ENCODE measurements at regions of chr4 and their contacts with region 1.

Region 1: GRCh38 chr4:185911556-185912064 is 99.6 kb upstream of the SORBS2 start:
- DNase-seq: no peak
- ATAC-seq: no peak
- H3K4me3 Mint-ChIP-seq: no peak overlapping the region
- H3K27ac Mint-ChIP-seq: peak overlapping the region; percentile 20; the same call in 1 of the 2 replicates
- H3K4me1 Mint-ChIP-seq: peaks cover 39% of the 10 kb centered on the region
- H3K27me3 Mint-ChIP-seq: no peaks in the 10 kb centered on the region
- CTCF ChIP-seq: no peak

Region 2: DNA sequence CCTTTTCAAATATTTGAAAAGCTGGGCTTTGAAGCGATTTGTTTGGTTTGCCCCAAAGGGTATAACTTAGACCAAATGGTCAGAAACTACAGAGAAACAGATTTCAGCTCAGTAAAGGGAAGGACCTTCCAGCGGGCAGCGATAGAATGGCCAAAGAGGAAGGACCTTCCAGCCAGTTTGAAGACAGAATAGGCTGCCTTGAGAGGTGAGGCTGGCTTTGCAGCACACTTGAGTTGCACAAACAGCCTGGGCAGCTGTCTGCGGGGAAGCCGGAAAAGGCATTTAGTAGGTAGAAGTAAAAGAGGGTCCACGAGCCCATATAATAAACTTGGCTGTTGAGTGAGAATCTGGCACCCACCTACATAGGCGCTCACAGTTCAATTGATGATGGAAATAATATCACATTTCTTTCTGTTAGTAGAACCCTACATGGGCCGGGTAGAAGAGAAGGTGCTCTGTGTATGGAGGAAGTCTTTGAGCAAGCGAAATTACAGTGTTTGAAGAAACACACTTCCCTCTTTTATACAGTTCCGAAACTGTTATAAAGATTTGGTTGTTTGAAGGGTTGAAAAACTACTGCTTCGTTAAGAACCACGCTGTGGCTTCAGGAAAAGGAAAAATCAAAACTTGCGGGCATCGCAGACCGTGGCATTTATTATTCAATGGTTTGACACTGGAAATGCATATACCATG is 24.6 kb before region 1 on chr4:
- CTCF ChIA-PET with region 1: no interaction called
- POLR2A ChIA-PET with region 1: no interaction called
- DNase-seq: no peak
- ATAC-seq: no peak
- H3K4me3 Mint-ChIP-seq: no peak overlapping the region
- H3K27ac Mint-ChIP-seq: no peak overlapping the region
- H3K4me1 Mint-ChIP-seq: 0 out of 2 replicates have a peak, but pooled peaks cover 5% of the 10 kb centered on the region
- H3K27me3 Mint-ChIP-seq: peaks cover 3% of the 10 kb centered on the region
- CTCF ChIP-seq: no peak

Region 3: GRCh38 chr4:185921583-185922555 is 10.3 kb after region 1 on chr4:
- CTCF ChIA-PET with region 1: no interaction called
- POLR2A ChIA-PET with region 1: interaction called, 10 read pairs
- DNase-seq: no peak
- ATAC-seq: no peak
- H3K4me3 Mint-ChIP-seq: no peak overlapping the region
- H3K27ac Mint-ChIP-seq: no peak overlapping the region
- H3K4me1 Mint-ChIP-seq: peaks cover 46% of the 10 kb centered on the region
- H3K27me3 Mint-ChIP-seq: no peaks in the 10 kb centered on the region
- CTCF ChIP-seq: no peak